ENCODE measurements at regions of chr18 and their contacts with region 1.

Region 1: DNA sequence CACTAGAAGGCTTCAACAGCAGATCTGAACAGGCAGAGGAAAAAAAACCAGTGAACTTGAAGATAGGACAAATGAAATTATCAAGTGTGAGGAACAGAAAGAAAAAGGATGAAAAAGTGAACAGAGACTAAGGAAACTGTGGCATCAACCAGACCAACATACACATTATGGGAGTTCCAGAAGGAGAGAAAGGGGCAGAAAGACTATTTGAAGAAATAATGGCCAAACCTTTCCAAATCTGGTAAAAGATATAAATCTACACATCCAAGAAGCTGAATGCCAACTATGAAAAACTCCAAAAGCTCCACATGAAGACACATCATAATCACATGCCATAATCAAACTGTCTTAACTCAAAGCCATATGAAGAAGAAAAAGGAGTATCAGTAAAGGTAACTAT is 79.8 kb downstream of the ROCK1 start:
- DNase-seq: no peak
- ATAC-seq: no peak
- H3K4me3 ChIP-seq: no peak overlapping the region
- H3K27ac ChIP-seq: no peak overlapping the region
- H3K4me1 ChIP-seq: no peaks in the 10 kb centered on the region
- H3K27me3 ChIP-seq: no peaks in the 10 kb centered on the region
- CTCF ChIP-seq: no peak

Region 2: DNA sequence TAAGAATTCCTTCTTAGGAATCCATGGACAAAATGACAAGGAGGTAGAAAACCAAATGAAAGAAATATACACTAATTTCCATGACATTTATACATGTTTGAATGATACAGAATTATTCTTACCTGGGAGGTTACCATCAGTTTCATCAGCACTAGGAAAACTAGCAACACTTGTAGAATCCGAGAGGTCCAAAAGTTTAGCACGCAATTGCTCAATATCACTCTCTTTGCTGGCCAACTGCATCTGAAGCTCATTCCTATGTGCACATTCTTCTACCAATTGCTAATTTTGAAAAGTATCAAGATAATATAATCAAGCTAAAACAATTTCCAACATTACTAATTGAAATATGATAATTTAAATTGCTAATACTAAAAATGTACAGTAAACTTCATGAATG is 65.0 kb before region 1 on chr18:
- CTCF ChIA-PET with region 1: no interaction called
- POLR2A ChIA-PET with region 1: no interaction called
- intact Hi-C with region 1: loop called (anchors 10 kb)
- DNase-seq: no peak
- ATAC-seq: no peak
- H3K4me3 ChIP-seq: no peak overlapping the region
- H3K27ac ChIP-seq: no peak overlapping the region
- H3K4me1 ChIP-seq: no peaks in the 10 kb centered on the region
- H3K27me3 ChIP-seq: no peaks in the 10 kb centered on the region
- CTCF ChIP-seq: no peak

Region 3: DNA sequence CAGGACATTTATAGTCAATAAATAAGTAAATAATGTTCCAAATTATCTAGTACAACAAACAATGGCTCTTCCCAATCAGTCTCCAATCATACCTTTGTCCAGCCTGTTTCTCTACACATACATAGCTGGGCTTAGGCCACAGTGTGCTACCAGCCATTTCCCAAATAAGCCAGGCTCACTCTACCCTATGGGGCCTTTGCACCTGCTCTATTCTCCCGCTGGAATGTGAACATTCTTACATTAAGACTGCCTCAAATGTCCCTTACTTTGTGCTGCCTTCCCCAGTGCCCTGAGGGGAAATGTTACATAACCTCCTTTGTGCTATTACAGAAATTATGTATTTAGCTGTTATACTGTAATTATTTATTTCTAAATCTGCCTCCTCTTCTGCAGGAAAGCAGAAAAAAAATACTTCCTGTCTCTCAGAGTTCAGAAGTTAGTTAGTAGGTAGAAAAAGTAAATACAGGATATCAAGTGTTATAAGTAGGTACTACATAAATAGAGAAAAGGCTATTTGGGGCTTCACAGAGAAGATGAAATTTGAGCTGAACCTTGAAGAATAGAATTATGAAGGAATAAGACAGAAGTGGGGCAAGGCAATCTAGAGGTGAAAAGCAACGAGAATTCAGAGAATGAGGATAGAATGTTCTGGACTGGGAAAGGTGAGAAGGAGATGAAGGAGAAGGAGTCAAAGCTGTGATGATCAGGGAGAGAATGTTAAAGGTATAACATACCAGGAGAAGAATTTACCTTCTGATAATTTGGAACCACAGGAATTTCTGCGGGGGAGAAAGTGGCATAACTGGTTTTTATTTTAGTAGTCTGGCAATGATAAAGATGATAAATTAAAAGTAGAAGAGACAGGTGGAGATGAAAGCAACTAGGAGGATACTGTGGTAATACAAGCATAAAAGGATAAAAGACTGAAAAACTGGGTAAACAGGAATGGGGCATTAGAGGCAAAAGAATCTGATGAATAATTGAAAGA is 42.8 kb after region 1 on chr18:
- CTCF ChIA-PET with region 1: no interaction called
- POLR2A ChIA-PET with region 1: interaction called, 10 read pairs
- intact Hi-C with region 1: no loop called
- DNase-seq: peak; percentile 88
- ATAC-seq: peak; percentile 71
- H3K4me3 ChIP-seq: peak overlapping the region; percentile 35; the same call in 1 of the 2 replicates
- H3K27ac ChIP-seq: no peak overlapping the region
- H3K4me1 ChIP-seq: peaks cover 22% of the 10 kb centered on the region
- H3K27me3 ChIP-seq: no peaks in the 10 kb centered on the region
- CTCF ChIP-seq: no peak

Region 4: GRCh38 chr18:21129566-21130216 is 97.8 kb after region 1 on chr18:
- CTCF ChIA-PET with region 1: no interaction called
- POLR2A ChIA-PET with region 1: no interaction called
- intact Hi-C with region 1: no loop called
- DNase-seq: no peak
- ATAC-seq: no peak
- H3K4me3 ChIP-seq: no peak overlapping the region
- H3K27ac ChIP-seq: no peak overlapping the region
- H3K4me1 ChIP-seq: no peaks in the 10 kb centered on the region
- H3K27me3 ChIP-seq: no peaks in the 10 kb centered on the region
- CTCF ChIP-seq: no peak

Measured in PC-3 (cell line).